ENCODE measurements at regions of chr1 and their contacts with region 1.

Region 1: DNA sequence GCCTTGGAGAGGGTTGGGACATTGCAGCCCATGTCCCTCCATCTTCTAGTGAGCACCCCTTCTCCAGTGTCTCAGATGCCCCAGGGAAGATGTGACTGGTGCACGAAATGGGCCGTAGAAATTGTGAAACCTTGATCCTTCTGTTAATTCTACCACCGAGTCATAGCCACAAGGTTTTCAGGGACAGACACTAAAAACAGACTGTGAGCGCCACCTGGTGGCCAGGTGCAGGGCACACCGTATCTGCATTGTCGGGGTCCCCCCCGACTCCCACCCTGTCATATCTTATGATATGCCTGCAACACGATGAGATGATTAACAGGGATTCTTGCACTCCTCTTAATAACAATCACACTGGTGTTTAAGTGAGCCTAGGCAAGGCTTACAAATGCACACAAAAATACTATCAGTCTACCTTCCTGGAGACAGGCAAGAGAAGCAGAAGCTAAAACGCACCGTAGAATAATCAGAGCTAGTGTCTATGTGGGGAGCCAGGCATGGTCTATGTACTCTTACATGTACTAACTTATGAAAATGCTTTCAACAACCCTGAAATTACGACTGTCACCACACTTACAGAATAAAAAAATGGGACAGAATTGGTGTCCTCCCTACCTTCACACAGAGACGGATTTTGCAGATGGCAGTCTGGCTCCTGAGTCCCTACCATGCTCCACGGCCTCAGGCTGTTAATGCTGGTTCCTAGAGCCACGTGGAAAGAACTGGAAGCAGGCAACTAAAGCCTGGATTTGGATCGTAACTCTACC is 57.9 kb downstream of the FHAD1 start:
- DNase-seq: peak; percentile 49 to 84
- ATAC-seq: peak; percentile 36

Region 2: DNA sequence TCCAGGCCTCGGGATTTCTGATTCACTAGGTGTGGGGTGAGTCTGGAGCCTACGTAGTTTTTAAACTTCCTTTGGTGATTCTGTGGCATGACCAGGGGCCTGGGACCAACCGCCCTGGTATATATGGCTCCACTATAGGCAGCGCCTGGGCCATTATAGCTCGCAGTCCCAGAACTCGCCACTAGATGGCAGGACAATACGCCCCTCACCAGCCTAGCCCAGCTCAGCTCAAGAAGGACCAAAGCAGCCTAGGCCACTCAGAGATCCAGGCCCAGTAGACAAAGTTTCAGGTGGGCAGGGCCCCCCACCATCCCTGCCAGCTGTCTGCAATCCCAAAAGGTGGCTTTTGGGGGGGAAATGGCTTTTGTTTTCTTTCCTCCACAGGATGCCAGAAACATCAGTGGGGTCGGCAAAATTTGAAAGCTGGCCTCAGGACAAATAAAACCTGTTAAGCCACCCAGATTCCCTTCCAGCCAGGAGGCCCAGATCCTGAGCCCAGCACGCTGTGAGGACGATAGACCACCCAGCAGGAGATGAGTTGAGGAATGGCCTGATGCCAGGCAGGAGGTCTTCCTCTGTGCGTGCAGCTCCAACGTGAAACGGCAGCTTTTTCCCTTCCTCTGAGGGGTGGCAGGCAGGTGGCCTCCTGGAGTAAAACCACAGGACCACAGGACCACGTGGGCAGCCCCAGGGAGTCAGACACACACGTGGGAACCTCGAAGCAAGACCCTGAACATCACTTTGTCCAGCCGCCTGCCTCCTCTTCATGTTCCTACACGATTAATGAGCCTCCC is 176.2 kb before region 1 on chr1:
- intact Hi-C with region 1: loop called (anchors 2 to 5 kb)
- DNase-seq: peak in 1 of 2 donors; percentile 85
- ATAC-seq: peak; percentile 96